SK-N-SH (cell line): ENCODE measurements at regions of chr20 and their contacts with region 1.

Region 1: DNA sequence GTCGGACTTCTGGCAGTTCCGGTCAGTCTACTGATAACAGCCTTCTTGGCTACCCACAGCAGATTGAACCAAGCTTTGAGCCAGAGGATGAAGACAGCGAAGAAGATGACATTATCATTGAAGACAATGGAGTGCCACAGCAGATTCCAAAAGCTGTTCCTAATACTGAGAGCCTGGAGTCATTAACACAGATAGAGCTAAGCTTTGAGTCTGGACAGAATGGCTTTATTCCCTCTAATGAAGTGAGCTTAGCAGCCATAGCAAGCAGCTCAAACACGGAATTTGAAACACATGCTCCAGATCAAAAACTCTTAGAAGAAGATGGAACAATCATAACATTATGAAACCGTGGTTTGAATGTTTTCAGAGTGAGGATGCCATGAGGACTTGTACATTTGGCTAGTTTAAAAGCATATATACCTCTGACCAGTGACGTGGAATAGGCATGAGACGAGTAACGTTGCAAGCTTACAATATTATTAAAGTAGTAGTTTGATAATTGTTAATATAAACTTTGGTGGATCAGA is 18.8 kb downstream of the PARD6B start:
- DNase-seq: no peak
- H3K4me3 ChIP-seq: no peak overlapping the region
- H3K27ac ChIP-seq: no peak overlapping the region
- H3K4me1 ChIP-seq: peaks cover 0 to 4% of the 10 kb centered on the region in 2 experiments; a peak in 2 of 4 replicates
- H3K27me3 ChIP-seq: no peaks in the 10 kb centered on the region
- CTCF ChIP-seq: no peak
- EP300 ChIP-seq: no peak
- RAD21 ChIP-seq: no peak

Region 2: GRCh38 chr20:50146732-50147662 is 603.2 kb before region 1 on chr20:
- CTCF ChIA-PET with region 1: no interaction called
- POLR2A ChIA-PET with region 1: no interaction called
- DNase-seq: no peak
- H3K4me3 ChIP-seq: no peak overlapping the region
- H3K27ac ChIP-seq: no peak overlapping the region
- H3K4me1 ChIP-seq: peaks cover 11 to 16% of the 10 kb centered on the region in 2 experiments; a peak in 2 of 4 replicates
- H3K27me3 ChIP-seq: no peaks in the 10 kb centered on the region
- CTCF ChIP-seq: no peak
- EP300 ChIP-seq: no peak
- RAD21 ChIP-seq: no peak

Region 3: GRCh38 chr20:50546729-50547314 is 203.4 kb before region 1 on chr20:
- CTCF ChIA-PET with region 1: no interaction called
- POLR2A ChIA-PET with region 1: no interaction called
- DNase-seq: no peak
- H3K4me3 ChIP-seq: no peak overlapping the region
- H3K27ac ChIP-seq: no peak overlapping the region
- H3K4me1 ChIP-seq: peaks cover 0 to under 1% of the 10 kb centered on the region in 2 experiments; a peak in 3 of 4 replicates
- H3K27me3 ChIP-seq: no peaks in the 10 kb centered on the region
- CTCF ChIP-seq: no peak
- EP300 ChIP-seq: no peak
- RAD21 ChIP-seq: no peak

Region 4: DNA sequence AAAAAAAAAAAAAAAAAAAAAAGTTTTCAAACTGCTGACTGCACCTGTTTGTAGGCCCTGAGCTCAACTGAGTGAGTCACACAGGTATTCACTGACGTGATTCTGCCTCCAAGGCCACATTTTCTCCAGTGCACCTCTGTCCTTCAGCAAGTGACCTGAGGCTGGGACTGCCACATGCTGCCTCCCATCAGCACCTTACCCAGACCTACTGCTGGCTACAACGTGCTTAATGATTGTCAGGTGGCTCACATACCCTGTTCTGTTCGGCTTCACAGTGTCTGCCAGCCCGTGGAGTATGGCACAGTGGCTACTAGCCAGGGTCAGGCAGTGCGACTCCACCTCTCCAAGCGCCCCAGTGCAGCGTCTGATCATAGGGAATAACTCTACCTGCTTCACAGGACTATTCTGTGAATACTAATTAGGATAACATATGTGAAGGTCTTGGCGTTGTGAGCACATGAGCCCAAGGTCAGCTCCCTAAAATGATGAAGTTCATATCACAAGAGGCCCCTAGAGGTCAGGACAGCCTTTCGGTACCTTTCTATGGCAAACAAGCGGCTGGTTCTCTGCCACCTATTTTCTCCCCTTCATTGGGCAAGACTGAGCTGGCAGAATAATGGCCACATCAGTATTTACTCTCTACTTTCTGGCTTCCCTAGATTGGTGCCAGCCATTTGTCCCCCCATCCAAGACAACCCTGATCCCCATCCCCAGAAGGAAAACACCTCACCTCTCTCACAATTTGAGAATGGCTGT is 86.9 kb before region 1 on chr20:
- CTCF ChIA-PET with region 1: interaction called, 25 read pairs
- POLR2A ChIA-PET with region 1: no interaction called
- DNase-seq: peak; percentile 56
- H3K4me3 ChIP-seq: no peak overlapping the region
- H3K27ac ChIP-seq: no peak overlapping the region; a peak in 1 of 4 replicates
- H3K4me1 ChIP-seq: peaks cover 0 to 5% of the 10 kb centered on the region in 2 experiments; a peak in 1 of 4 replicates
- H3K27me3 ChIP-seq: no peaks in the 10 kb centered on the region
- CTCF ChIP-seq: peak; percentile 27; the same call in 1 of the 2 replicates
- EP300 ChIP-seq: no peak
- RAD21 ChIP-seq: peak; percentile 73

Region 5: DNA sequence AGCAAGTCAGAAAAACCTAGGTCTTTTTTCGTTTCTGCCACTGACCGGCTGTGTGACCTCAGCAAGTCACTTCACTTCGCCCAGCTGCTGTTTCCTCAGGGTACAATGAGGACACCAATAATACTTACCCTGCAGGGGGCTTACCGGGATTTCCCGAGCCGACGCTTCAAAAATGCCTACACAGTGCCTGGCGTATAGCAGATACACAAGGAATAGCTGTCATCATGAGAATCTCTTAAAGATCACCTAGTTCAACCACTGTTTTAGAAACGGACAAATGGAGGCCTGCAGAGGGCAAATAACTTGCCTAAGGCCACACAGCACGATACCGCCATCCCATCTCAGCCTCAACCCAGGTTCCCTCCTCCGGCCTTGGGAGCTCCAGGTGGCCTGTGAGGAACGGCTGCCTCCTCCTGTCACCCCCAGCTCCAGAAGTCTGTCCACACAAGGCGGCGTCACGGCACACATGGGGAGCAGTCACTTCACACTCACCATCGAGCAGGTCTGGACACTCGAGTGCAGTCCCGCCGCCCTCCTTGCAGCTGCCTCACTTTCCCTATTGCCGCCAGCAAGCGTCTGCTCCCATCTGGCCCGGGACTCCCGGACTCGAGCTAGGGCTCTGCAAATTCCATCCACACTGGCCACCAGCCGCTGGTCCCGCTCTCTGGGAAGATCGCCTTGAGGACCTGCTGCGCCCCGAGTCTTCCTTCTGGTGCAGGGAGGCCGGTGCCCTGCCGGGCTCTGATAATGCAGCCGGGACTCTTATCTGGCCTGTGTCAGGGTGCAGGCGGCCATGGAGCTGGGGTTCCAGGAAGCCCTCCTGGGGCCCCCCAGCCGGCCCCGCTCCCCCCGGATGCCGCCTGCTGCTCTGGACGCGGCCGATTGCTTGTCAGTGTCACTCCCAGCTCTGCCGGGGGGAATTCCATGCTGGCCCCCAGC is 59.3 kb before region 1 on chr20 and contains the start of gene RIPOR3:
- CTCF ChIA-PET with region 1: interaction called, 13 read pairs
- POLR2A ChIA-PET with region 1: interaction called, 3 read pairs
- DNase-seq: peak; percentile 67
- H3K4me3 ChIP-seq: peak within 1 kb of the TSS; percentile 23 to 33; a peak in 3 of 4 replicates
- H3K27ac ChIP-seq: no peak within 1 kb of the TSS
- H3K4me1 ChIP-seq: peaks cover 18 to 30% of the 10 kb centered on the region in 2 experiments
- H3K27me3 ChIP-seq: no peaks in the 10 kb centered on the region
- CTCF ChIP-seq: no peak
- EP300 ChIP-seq: no peak
- RAD21 ChIP-seq: no peak
- polyA plus RNA-seq, gene RIPOR3: 1.0 and 1.2 TPM in 2 replicates

Region 6: GRCh38 chr20:50731055-50731871 is 18.9 kb before region 1 on chr20 and contains the start of gene PARD6B:
- CTCF ChIA-PET with region 1: interaction called, 33 read pairs
- POLR2A ChIA-PET with region 1: no interaction called
- DNase-seq: peak; percentile 100
- H3K4me3 ChIP-seq: peak within 1 kb of the TSS; percentile 74 to 90
- H3K27ac ChIP-seq: peak within 1 kb of the TSS in 1 of 2 experiments; percentile 73; a peak in 2 of 4 replicates
- H3K4me1 ChIP-seq: peaks cover 6 to 10% of the 10 kb centered on the region in 2 experiments; a peak in 3 of 4 replicates
- H3K27me3 ChIP-seq: no peaks in the 10 kb centered on the region
- CTCF ChIP-seq: no peak
- EP300 ChIP-seq: no peak
- RAD21 ChIP-seq: no peak
- polyA plus RNA-seq, gene PARD6B: 0.49 and 0.57 TPM in 2 replicates

Region 7: GRCh38 chr20:50762435-50763201 is 12.4 kb after region 1 on chr20:
- CTCF ChIA-PET with region 1: interaction called, 14 read pairs
- POLR2A ChIA-PET with region 1: no interaction called
- DNase-seq: peak; percentile 58
- H3K4me3 ChIP-seq: peak overlapping the region in 1 of 2 experiments; percentile 0; a peak in 1 of 4 replicates
- H3K27ac ChIP-seq: peak overlapping the region; percentile 56 to 80
- H3K4me1 ChIP-seq: peaks cover 10 to 30% of the 10 kb centered on the region in 2 experiments; a peak in 3 of 4 replicates
- H3K27me3 ChIP-seq: no peaks in the 10 kb centered on the region
- CTCF ChIP-seq: no peak
- EP300 ChIP-seq: no peak; a peak in 2 of 4 replicates
- RAD21 ChIP-seq: no peak; the same call in 1 of the 2 replicates

Region 8: DNA sequence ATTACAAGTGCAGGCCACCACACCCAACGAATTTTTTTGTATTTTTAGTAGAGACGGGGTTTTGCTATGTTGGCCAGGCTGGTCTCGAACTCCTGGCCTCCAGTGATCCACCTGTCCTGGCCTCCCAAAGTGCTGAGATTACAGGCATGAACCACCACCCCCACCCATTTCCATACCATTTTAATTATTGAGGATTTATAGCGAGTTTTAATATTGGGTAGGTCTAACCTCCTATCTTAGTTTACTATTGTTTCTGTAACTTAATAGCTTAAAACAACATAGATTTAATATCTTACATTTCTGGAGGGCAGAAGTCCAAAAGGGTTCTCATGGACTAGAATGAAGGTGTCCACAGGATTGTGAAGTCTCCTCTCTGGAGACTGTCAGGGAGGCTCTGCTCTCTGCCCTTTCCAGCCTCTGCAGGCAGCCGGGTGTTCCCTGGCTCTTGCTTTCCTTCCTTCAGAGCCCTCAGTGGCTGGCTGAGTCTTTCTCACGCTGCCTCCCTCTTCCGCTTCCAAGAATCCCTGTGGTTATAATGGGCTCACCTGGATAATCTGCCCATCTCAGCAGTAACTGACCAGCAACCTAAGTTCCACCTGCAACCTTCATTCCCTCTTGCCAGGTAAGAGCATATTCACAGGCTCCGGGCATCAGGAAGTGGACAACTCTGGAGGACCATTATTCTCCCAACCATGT is 26.1 kb after region 1 on chr20:
- CTCF ChIA-PET with region 1: interaction called, 14 read pairs
- POLR2A ChIA-PET with region 1: no interaction called
- DNase-seq: no peak
- H3K4me3 ChIP-seq: no peak overlapping the region
- H3K27ac ChIP-seq: no peak overlapping the region
- H3K4me1 ChIP-seq: peaks cover 0 to 2% of the 10 kb centered on the region in 2 experiments; a peak in 1 of 4 replicates
- H3K27me3 ChIP-seq: no peaks in the 10 kb centered on the region
- CTCF ChIP-seq: no peak
- EP300 ChIP-seq: no peak
- RAD21 ChIP-seq: no peak

Region 9: DNA sequence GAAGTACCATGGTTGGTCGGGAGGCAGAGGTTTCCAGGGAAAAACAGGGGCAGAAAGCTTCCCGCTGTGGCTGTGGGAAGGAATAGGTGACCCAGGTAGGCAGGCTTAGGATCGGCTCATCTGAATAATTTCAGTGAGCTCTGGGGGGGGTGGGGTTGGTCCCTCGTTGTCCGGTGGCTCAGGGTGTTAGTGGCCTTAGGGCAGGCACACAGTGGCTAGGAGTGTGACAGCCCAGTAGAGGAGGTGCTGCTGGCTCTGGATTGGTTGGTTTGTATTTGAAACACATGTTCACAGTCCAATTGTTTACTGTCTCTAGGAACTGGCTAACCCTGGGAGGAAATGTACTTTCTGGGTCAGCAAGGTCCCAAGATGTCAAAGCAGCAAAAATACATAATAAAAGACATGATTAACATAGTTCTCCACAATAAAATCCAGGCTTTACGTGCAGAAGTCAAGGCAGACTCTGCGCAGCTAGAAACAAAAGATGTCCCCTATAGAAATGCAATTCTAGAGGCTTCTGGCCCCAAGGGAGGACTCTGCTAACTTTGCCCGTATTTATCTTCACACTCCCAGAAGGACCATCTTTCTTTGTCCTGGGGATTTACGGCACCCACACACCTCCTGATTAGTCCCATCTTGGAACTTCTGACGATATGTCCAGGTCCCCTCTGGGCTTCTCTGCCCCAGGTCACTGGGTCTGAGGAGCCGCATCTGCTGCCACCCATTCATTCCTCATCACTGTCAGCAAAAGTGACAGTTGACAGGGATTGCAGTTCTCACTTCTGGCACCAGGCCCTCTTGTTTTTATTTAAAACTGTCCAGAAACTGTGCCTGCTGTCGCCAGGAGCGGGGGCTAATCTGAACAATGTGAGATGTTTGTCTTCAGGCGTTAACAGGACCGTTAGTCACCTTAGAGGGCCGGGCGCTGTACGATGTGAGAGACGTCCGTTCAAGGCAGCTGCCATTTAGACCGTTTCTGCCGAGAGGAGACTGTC is 227.1 kb after region 1 on chr20:
- CTCF ChIA-PET with region 1: no interaction called
- POLR2A ChIA-PET with region 1: no interaction called
- DNase-seq: no peak
- H3K4me3 ChIP-seq: no peak overlapping the region
- H3K27ac ChIP-seq: no peak overlapping the region; a peak in 1 of 4 replicates
- H3K4me1 ChIP-seq: peaks cover 4 to 12% of the 10 kb centered on the region in 2 experiments; a peak in 1 of 4 replicates
- H3K27me3 ChIP-seq: no peaks in the 10 kb centered on the region
- CTCF ChIP-seq: no peak
- EP300 ChIP-seq: 0 out of 4 replicates have a peak, but pooled peaks of 1 of the 2 experiments have one; percentile 25
- RAD21 ChIP-seq: no peak

Region 10: DNA sequence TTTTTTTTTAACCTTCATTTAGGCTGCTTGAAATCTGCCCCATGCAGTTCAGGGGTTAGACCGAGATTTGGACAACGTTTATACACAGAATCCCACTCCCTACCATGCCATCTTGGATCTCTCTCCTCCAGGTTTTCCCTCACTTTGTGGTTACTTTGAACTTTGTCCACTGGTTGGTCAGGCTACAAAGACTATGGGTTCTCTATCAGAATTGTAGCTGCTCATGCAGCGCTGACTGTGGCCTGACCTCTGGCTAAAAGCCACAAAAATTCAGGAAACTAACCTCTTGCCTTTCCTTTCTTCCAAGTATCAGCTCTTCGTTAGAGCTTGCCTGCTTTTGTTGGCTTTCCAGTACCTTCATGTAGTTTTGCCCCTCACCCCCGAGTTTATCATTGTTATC is 317.6 kb after region 1 on chr20:
- CTCF ChIA-PET with region 1: no interaction called
- POLR2A ChIA-PET with region 1: no interaction called
- DNase-seq: no peak
- H3K4me3 ChIP-seq: no peak overlapping the region
- H3K27ac ChIP-seq: no peak overlapping the region
- H3K4me1 ChIP-seq: no peaks in the 10 kb centered on the region
- H3K27me3 ChIP-seq: peaks cover 9% of the 10 kb centered on the region
- CTCF ChIP-seq: no peak
- EP300 ChIP-seq: no peak
- RAD21 ChIP-seq: no peak